Activated CD8-positive, alpha-beta T cell treated with anti-CD3 and anti-CD28 coated beads for 36 hours (primary cell): ENCODE measurements at regions of chr1 and their contacts with region 1.

Region 1: GRCh38 chr1:155017041-155017945 is 14.7 kb downstream of the ZBTB7B start:
- DNase-seq: peak; percentile 94
- ATAC-seq: peak; percentile 93
- H3K4me3 Mint-ChIP-seq: peak overlapping the region; percentile 51
- H3K27ac Mint-ChIP-seq: peak overlapping the region; percentile 60
- H3K4me1 Mint-ChIP-seq: peaks cover 51% of the 10 kb centered on the region
- H3K27me3 Mint-ChIP-seq: peaks cover 4% of the 10 kb centered on the region
- CTCF ChIP-seq: peak; percentile 97

Region 2: GRCh38 chr1:154955718-154956543 is 61.4 kb before region 1 on chr1 and contains the start of gene PBXIP1:
- CTCF ChIA-PET with region 1: interaction called, 37 read pairs
- POLR2A ChIA-PET with region 1: interaction called, 3 read pairs
- intact Hi-C with region 1: no loop called
- DNase-seq: peak; percentile 86
- ATAC-seq: peak; percentile 49
- H3K4me3 Mint-ChIP-seq: peak within 1 kb of the TSS; percentile 91
- H3K27ac Mint-ChIP-seq: peak within 1 kb of the TSS; percentile 97
- H3K4me1 Mint-ChIP-seq: peaks cover 69% of the 10 kb centered on the region
- H3K27me3 Mint-ChIP-seq: no peaks in the 10 kb centered on the region
- CTCF ChIP-seq: peak; percentile 26
- total RNA-seq, gene PBXIP1: 17.7 to 19.4 TPM

Region 3: DNA sequence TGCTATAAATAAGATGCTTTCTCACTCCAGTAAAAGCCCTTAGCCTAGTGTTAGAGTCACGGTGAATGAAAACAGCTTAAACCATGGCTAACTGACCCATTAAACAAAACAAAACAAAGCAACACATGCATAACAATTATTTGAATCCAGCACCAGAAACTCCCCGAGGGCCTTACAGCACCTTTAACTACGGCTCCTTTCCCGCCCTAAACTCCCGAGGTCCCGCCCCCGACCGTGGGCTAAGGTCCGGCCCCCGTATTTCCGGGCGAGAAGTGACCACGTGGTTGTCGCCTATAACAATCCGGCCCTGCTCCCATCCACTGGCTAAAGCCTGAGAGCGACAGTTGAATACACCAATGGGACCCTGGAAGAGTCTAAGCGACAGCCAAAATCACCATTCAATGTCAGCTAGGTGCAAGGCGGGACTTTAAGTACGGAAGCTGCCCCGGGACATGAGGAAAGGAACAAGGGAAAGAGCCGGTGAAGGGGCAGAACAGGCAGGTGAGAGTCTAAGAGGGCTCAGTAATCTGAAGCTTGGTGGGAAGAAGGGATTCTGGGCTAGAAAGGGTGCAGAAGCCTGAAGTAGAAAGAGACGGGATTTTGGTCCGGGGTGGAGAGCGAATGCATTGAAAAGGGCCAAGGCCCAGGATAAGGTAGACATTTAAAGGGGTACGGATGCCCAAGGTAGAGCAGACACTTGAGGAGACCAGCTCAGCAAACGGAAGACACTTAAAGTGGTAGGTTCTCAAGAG is 34.2 kb before region 1 on chr1 and contains the start of gene FLAD1:
- CTCF ChIA-PET with region 1: interaction called, 57 read pairs
- POLR2A ChIA-PET with region 1: interaction called, 13 read pairs
- intact Hi-C with region 1: no loop called
- DNase-seq: peak; percentile 98
- ATAC-seq: peak; percentile 99
- H3K4me3 Mint-ChIP-seq: no peak within 1 kb of the TSS
- H3K27ac Mint-ChIP-seq: no peak within 1 kb of the TSS
- H3K4me1 Mint-ChIP-seq: peaks cover 12% of the 10 kb centered on the region
- H3K27me3 Mint-ChIP-seq: no peaks in the 10 kb centered on the region
- CTCF ChIP-seq: no peak
- total RNA-seq, gene FLAD1: 31.5 to 32.9 TPM

Region 4: GRCh38 chr1:155001675-155002463 is 15.4 kb before region 1 on chr1:
- CTCF ChIA-PET with region 1: interaction called, 77 read pairs
- POLR2A ChIA-PET with region 1: interaction called, 29 read pairs
- intact Hi-C with region 1: no loop called
- DNase-seq: peak; percentile 100
- ATAC-seq: peak; percentile 71
- H3K4me3 Mint-ChIP-seq: peak overlapping the region; percentile 70
- H3K27ac Mint-ChIP-seq: peak overlapping the region; percentile 92
- H3K4me1 Mint-ChIP-seq: peaks cover 56% of the 10 kb centered on the region
- H3K27me3 Mint-ChIP-seq: no peaks in the 10 kb centered on the region
- CTCF ChIP-seq: no peak

Region 5: GRCh38 chr1:155050560-155051341 is 33.5 kb after region 1 on chr1 and contains the start of gene ADAM15:
- CTCF ChIA-PET with region 1: interaction called, 38 read pairs
- POLR2A ChIA-PET with region 1: interaction called, 7 read pairs
- intact Hi-C with region 1: no loop called
- DNase-seq: peak; percentile 80
- ATAC-seq: peak; percentile 79
- H3K4me3 Mint-ChIP-seq: peak within 1 kb of the TSS; percentile 88
- H3K27ac Mint-ChIP-seq: peak within 1 kb of the TSS; percentile 60
- H3K4me1 Mint-ChIP-seq: peaks cover 20% of the 10 kb centered on the region
- H3K27me3 Mint-ChIP-seq: no peaks in the 10 kb centered on the region
- CTCF ChIP-seq: peak; percentile 99
- total RNA-seq, gene ADAM15: 36.4 to 37.2 TPM

Region 6: DNA sequence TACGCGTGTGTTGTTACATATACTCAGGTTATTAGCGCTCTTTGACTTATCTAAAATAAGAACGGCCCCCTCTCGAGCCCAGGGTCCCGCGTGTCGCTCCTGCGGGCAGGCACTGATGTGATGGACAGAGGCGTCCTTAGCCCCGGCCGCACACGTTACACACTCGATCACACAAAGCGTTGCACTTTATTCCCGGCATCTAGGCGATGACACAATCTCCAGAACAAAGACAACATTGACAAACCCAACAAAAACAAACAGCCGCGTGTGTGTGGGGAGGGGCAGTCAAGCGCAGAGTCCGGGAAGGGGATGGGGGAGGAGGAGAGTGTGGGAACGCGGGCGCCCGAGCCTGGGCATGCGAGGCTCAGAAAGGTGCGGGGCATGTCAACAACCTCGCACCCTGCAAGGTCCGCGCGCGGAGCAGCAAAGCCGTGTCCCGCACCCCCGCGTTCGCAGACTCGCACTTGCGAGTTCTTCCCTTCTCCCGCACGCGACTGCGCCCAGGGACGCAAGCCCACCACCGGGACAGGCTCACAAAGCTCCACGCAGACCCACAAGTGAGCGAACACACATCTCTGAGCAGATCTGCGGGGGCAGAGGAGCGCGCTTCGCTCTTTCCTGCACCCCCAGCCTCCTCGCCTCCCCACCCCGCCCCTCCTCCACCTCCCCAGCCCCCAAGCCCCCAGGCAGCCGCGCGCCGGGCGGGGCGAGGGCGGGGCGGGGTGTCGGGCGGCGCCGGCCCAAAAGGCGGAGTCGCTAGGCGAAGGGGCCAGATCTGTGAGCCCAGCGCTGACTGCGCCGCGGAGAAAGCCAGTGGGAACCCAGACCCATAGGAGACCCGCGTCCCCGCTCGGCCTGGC is 110.0 kb after region 1 on chr1 and contains the start of gene EFNA1:
- CTCF ChIA-PET with region 1: no interaction called
- POLR2A ChIA-PET with region 1: no interaction called
- intact Hi-C with region 1: no loop called
- DNase-seq: peak; percentile 43
- ATAC-seq: peak; percentile 59
- H3K4me3 Mint-ChIP-seq: peak within 1 kb of the TSS; percentile 73
- H3K27ac Mint-ChIP-seq: peak within 1 kb of the TSS; percentile 34
- H3K4me1 Mint-ChIP-seq: peaks cover 34% of the 10 kb centered on the region
- H3K27me3 Mint-ChIP-seq: peaks cover 21% of the 10 kb centered on the region
- CTCF ChIP-seq: no peak
- total RNA-seq, gene EFNA1: 0.59 to 0.60 TPM